ENCODE measurements at regions of chr13 and their contacts with region 1.

Region 1: GRCh38 chr13:107211073-107211472 is 643.1 kb upstream of the ARGLU1 start:
- DNase-seq: no peak
- H3K4me3 ChIP-seq: peak overlapping the region; percentile 18 to 19
- H3K27ac ChIP-seq: no peak overlapping the region
- H3K4me1 ChIP-seq: peaks cover 9% of the 10 kb centered on the region
- H3K27me3 ChIP-seq: no peaks in the 10 kb centered on the region
- CTCF ChIP-seq: peak; percentile 72 to 87 (median 86)
- POLR2A ChIP-seq: no peak

Region 2: GRCh38 chr13:107138486-107138885 is 72.6 kb before region 1 on chr13:
- intact Hi-C with region 1: no loop called
- DNase-seq: no peak
- H3K4me3 ChIP-seq: no peak overlapping the region
- H3K27ac ChIP-seq: no peak overlapping the region
- H3K4me1 ChIP-seq: peaks cover 8% of the 10 kb centered on the region
- H3K27me3 ChIP-seq: no peaks in the 10 kb centered on the region
- CTCF ChIP-seq: no peak
- POLR2A ChIP-seq: no peak

Region 3: DNA sequence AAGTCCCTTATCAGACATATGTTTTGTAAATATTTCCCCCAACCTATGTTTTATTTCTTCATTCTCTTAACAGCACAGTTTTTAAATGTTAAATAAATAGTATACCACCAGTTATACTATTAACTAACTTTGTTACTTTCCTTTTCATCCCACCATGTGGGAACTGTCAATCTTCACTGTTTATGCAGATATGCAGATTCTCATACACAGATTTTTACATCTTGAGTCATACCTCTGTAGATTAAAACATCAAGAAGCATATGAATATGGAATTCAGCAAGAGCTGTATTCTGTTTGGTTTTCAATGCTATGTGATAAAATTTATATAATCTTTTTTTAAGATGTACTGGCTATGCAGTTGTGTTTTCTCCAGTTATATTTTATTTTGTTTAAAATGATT is 438.0 kb after region 1 on chr13:
- intact Hi-C with region 1: loop called (anchors 5 kb)
- DNase-seq: no peak
- H3K4me3 ChIP-seq: no peak overlapping the region
- H3K27ac ChIP-seq: no peak overlapping the region
- H3K4me1 ChIP-seq: no peaks in the 10 kb centered on the region
- H3K27me3 ChIP-seq: no peaks in the 10 kb centered on the region
- CTCF ChIP-seq: no peak
- POLR2A ChIP-seq: no peak

Region 4: DNA sequence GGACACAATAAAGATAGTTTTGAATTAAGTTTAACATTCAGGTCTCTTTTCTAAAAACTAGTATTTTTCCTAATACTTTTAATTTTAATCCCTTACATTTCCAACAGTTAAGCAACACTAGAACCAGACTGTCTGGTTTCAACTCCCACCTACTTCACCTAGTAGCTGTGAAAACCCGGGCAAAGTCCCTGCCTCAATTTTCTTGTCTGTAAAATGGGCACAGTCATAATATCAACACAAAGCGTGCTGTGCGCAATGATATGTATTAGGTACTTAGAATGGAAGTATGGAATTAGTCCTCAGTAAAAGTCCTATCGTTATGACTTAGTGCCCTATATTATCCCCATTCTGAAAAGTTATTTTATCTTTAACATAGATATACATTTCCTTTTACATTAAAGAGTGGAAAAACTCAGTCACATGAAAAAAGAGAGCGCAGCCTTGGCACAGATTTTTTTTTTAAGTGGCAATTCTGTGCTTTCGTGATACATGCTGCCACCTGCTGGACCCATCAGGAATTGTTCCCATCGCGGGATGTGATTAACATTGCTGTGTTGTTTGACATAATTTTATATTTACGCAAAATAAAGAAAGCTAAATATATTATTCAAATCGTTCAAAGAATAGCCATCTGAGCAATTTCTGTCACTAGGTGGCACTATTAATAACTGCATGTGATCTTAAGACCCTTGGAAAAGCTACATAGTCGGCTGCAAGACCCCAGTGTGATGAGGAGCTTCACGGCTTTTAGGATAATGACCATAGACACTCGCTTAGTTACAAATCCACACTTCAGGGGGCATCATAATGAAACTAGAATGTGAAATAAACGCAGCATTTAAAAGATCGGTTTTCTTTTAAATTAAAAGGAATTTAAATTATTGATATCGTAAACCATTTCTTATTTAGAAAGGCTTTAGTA is 944.4 kb after region 1 on chr13:
- intact Hi-C with region 1: loop called (anchors 10 kb)
- DNase-seq: no peak
- H3K4me3 ChIP-seq: no peak overlapping the region
- H3K27ac ChIP-seq: no peak overlapping the region
- H3K4me1 ChIP-seq: no peaks in the 10 kb centered on the region
- H3K27me3 ChIP-seq: no peaks in the 10 kb centered on the region
- CTCF ChIP-seq: peak; percentile 26 to 60 (median 45)
- POLR2A ChIP-seq: no peak